Activated B cell treated with CpG ODN at 0.5 μM for 24 hours (primary cell): ENCODE measurements at regions of chr9 and their contacts with region 1.

Region 1: GRCh38 chr9:110099236-110100095 is 108.5 kb downstream of the C9orf152 start:
- DNase-seq: no peak
- ATAC-seq: no peak
- H3K4me3 Mint-ChIP-seq: no peak overlapping the region
- H3K27ac Mint-ChIP-seq: peak overlapping the region; percentile 41
- H3K4me1 Mint-ChIP-seq: peaks cover 85% of the 10 kb centered on the region
- H3K27me3 Mint-ChIP-seq: no peaks in the 10 kb centered on the region
- CTCF ChIP-seq: no peak

Region 2: GRCh38 chr9:110081395-110081794 is 18.1 kb before region 1 on chr9:
- CTCF ChIA-PET with region 1: no interaction called
- POLR2A ChIA-PET with region 1: no interaction called
- intact Hi-C with region 1: loop called (anchors 1 kb)
- DNase-seq: no peak
- ATAC-seq: no peak
- H3K4me3 Mint-ChIP-seq: peak overlapping the region; percentile 52
- H3K27ac Mint-ChIP-seq: peak overlapping the region; percentile 66
- H3K4me1 Mint-ChIP-seq: peaks cover 91% of the 10 kb centered on the region
- H3K27me3 Mint-ChIP-seq: no peaks in the 10 kb centered on the region
- CTCF ChIP-seq: no peak

Region 3: DNA sequence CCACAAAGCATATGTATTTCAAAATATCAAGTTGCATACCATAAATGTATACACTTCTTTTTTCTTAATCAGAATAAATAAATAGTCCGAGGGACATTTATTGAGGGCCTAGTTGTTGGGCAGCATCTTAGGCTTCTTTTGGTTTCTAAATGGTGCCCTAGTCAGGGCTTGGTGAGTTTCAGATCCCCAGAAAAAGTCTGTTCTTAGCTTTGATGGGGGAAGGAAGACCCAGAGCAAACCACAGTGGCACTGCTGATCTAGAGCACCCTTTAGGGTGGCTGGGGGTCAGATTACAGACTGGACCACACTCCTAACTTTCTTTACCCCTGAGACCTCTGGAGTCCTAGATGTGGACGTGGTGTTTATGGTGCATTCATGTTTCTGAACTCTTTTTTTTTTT is 10.7 kb after region 1 on chr9:
- CTCF ChIA-PET with region 1: no interaction called
- POLR2A ChIA-PET with region 1: interaction called, 15 read pairs
- intact Hi-C with region 1: loop called (anchors 2 kb)
- DNase-seq: no peak
- ATAC-seq: peak; percentile 81
- H3K4me3 Mint-ChIP-seq: peak overlapping the region; percentile 19
- H3K27ac Mint-ChIP-seq: peak overlapping the region; percentile 35
- H3K4me1 Mint-ChIP-seq: peaks cover 85% of the 10 kb centered on the region
- H3K27me3 Mint-ChIP-seq: no peaks in the 10 kb centered on the region
- CTCF ChIP-seq: no peak

Region 4: GRCh38 chr9:110115341-110115820 is 15.9 kb after region 1 on chr9:
- CTCF ChIA-PET with region 1: no interaction called
- POLR2A ChIA-PET with region 1: interaction called, 15 read pairs
- intact Hi-C with region 1: loop called (anchors 2 kb)
- DNase-seq: no peak
- ATAC-seq: no peak
- H3K4me3 Mint-ChIP-seq: no peak overlapping the region
- H3K27ac Mint-ChIP-seq: no peak overlapping the region
- H3K4me1 Mint-ChIP-seq: peaks cover 79% of the 10 kb centered on the region
- H3K27me3 Mint-ChIP-seq: no peaks in the 10 kb centered on the region
- CTCF ChIP-seq: no peak

Region 5: DNA sequence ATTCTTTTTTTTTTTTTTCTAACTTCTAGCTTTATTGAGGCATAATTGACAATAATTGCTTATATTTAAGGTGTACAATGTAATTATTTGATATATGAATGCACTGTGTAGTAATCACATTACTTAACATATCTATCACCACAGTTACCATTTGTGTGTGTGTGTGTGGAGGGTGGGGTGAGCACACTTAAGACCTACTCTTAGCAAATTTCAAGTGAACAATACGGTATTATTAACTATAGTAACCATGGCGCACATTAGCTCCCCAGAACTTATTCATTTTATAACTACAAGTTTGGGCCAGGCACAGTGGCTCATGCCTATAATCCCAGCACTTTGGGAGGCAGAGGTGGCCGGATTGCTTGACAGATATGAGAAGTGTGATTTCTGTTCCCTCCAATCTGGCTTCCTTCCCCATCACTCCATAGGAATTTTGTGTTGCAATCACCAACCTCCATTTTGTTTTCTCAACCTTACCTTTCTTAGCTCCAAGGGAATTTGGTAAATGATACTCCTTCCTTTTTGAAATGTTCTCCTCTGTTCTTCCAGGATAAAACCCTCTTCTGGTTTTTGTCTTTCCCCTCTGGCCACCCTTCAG is 141.9 kb after region 1 on chr9:
- CTCF ChIA-PET with region 1: no interaction called
- POLR2A ChIA-PET with region 1: no interaction called
- intact Hi-C with region 1: no loop called
- DNase-seq: no peak
- ATAC-seq: no peak
- H3K4me3 Mint-ChIP-seq: no peak overlapping the region
- H3K27ac Mint-ChIP-seq: no peak overlapping the region
- H3K4me1 Mint-ChIP-seq: no peaks in the 10 kb centered on the region
- H3K27me3 Mint-ChIP-seq: no peaks in the 10 kb centered on the region
- CTCF ChIP-seq: no peak